ENCODE measurements at regions of chr10 and their contacts with region 1.

Region 1: DNA sequence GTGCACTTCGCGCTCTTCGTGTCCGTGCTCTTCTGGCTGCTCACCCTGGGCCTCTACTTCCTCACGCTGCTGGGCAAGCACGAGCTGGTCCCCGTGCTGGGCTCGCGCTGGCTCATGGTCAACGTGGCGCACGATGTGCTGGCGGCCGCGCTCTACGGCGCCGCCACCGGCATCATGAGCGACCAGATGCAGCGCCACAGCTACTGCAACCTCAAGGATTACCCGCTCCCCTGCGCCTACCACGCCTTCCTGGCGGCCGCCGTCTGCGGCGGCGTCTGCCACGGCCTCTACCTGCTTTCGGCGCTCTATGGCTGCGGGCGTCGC is 480 bp downstream of the MARVELD1 start:
- DNase-seq: peak; percentile 26 to 89 (median 44)
- ATAC-seq: peak; percentile 85
- H3K4me3 ChIP-seq: peak overlapping the region; percentile 67
- H3K4me3 Mint-ChIP-seq: peak overlapping the region; percentile 100
- H3K27ac ChIP-seq: no peak overlapping the region
- H3K27ac Mint-ChIP-seq: peak overlapping the region; percentile 35
- H3K4me1 ChIP-seq: peaks cover 22% of the 10 kb centered on the region
- H3K4me1 Mint-ChIP-seq: peaks cover 15% of the 10 kb centered on the region
- H3K27me3 ChIP-seq: peaks cover 0 to 7% of the 10 kb centered on the region in 2 experiments
- H3K27me3 Mint-ChIP-seq: peaks cover 28% of the 10 kb centered on the region
- CTCF ChIP-seq: no peak

Region 2: DNA sequence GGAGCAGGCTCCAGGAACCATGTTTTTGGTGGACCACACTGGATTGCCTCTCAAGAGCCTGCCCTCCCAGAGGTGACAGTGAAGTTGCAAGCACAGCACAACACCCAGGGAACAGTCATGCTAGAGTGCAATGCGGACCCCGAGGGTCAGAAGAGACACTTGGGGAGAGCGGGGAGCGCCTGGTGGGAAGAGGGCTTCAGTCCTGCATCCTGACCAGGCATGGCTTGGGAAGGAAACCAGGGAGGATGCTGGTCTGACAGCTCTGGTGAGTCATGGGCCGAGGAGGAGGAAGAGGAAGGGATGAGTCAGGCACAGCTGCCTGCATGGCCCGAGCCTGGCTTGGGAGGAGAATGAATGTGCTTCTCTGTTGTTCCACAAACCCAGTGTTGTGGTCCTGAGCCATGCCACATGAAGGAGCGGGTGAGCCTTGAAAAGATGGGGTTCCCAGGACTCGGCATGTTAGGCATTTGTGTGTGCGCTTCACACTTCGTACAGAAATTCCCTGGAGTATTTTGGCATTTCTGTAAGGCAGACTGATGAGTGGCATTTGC is 170.9 kb before region 1 on chr10:
- CTCF ChIA-PET with region 1: no interaction called
- POLR2A ChIA-PET with region 1: no interaction called
- intact Hi-C with region 1: no loop called
- DNase-seq: peak in 3 of 14 experiments; percentile 49 to 72 (median 63)
- ATAC-seq: no peak
- H3K4me3 ChIP-seq: no peak overlapping the region
- H3K4me3 Mint-ChIP-seq: no peak overlapping the region
- H3K27ac ChIP-seq: no peak overlapping the region
- H3K27ac Mint-ChIP-seq: no peak overlapping the region
- H3K4me1 ChIP-seq: peaks cover 10% of the 10 kb centered on the region
- H3K4me1 Mint-ChIP-seq: no peaks in the 10 kb centered on the region
- H3K27me3 ChIP-seq: no peaks in the 10 kb centered on the region
- H3K27me3 Mint-ChIP-seq: no peaks in the 10 kb centered on the region
- CTCF ChIP-seq: no peak

Region 3: DNA sequence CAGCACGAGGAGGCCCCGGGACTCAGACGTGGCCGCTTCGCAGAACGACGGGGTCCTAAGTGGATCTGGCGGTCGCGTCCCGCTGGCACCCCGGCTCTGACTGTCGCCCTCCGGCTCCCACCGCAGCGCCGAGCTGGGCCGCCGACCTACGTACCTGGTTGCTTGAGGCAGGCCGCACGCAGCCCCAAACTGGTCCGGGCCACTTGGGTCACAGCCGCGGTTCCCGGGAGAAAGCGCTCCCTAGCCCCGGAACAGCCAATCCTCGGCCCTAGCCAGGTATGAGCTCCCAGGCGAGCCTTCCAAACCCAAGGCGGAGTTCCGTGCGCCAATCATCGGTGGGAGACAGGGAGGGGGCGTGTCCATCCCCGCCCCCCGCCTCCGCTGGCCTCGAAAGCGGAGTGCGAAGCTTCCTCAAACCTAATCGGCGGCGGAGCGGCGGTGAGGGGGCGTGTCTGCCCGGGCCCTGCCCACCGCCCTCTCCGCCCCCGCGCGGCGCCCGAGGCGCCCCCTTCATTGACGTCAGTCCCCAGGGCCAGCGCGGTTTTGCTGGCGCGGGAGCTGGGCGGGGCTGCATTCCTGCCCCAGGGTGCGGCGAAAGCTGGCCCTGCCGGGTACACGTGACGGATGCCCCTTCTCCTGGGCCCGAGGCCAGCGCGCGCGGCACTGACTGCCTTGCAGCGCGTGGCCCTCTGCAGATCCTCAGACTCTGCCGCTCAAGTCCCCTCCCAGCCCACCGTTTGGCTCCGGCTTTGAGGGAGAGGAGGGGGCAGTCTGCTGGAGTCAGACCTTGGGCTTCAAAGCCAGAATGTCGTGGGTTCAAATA is 26.8 kb before region 1 on chr10 and contains the start of gene AVPI1:
- CTCF ChIA-PET with region 1: interaction called, 10 read pairs
- POLR2A ChIA-PET with region 1: interaction called, 14 read pairs
- intact Hi-C with region 1: no loop called
- DNase-seq: peak; percentile 90 to 98 (median 94)
- ATAC-seq: peak; percentile 91
- H3K4me3 ChIP-seq: peak within 1 kb of the TSS; percentile 82
- H3K4me3 Mint-ChIP-seq: peak within 1 kb of the TSS; percentile 90
- H3K27ac ChIP-seq: peak within 1 kb of the TSS; percentile 52 to 62
- H3K27ac Mint-ChIP-seq: peak within 1 kb of the TSS; percentile 75
- H3K4me1 ChIP-seq: peaks cover 35% of the 10 kb centered on the region
- H3K4me1 Mint-ChIP-seq: peaks cover 16% of the 10 kb centered on the region
- H3K27me3 ChIP-seq: no peaks in the 10 kb centered on the region
- H3K27me3 Mint-ChIP-seq: no peaks in the 10 kb centered on the region
- CTCF ChIP-seq: no peak
- total RNA-seq, gene AVPI1: 10.7 to 11.6 TPM

Region 4: DNA sequence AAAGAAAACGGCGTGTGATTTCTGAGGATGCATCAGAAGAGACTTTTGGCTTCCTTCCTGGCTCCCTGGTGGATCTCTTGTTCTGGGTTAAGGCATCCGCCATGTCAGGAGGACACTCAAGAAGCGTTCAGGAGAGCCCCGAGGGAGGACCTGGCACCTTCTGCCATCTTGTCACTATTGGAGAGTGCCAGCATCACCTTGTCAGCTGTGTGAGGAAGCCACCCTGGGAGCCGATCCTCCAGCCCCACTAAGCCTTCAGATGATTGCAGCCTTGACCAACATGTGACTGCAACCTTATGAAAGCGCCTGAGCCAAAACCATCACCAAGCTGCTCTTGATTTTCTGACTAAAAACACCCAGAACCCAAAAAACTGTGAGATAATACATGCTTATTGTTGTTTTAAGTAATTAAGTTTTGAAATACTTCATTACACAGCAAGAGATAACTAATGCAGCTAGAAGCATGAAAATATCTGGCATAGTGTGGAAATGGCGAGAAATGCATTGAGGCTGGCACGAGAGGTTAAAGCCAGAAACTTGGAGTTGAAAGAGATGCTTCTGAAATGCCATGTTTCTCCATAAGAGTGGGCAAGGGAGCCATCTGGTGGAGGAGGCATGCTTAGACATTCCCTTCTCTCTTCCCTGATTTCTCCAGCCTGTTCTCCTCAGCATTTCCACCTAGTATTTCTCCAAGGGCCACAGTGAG is 17.5 kb after region 1 on chr10:
- CTCF ChIA-PET with region 1: interaction called, 11 read pairs
- POLR2A ChIA-PET with region 1: interaction called, 13 read pairs
- intact Hi-C with region 1: loop called (anchors 1 kb)
- DNase-seq: peak; percentile 27 to 82 (median 48)
- ATAC-seq: peak; percentile 75
- H3K4me3 ChIP-seq: no peak overlapping the region
- H3K4me3 Mint-ChIP-seq: no peak overlapping the region
- H3K27ac ChIP-seq: no peak overlapping the region
- H3K27ac Mint-ChIP-seq: no peak overlapping the region
- H3K4me1 ChIP-seq: peaks cover 8% of the 10 kb centered on the region
- H3K4me1 Mint-ChIP-seq: peaks cover 12% of the 10 kb centered on the region
- H3K27me3 ChIP-seq: no peaks in the 10 kb centered on the region
- H3K27me3 Mint-ChIP-seq: peaks cover 8% of the 10 kb centered on the region
- CTCF ChIP-seq: peak; percentile 83

Region 5: DNA sequence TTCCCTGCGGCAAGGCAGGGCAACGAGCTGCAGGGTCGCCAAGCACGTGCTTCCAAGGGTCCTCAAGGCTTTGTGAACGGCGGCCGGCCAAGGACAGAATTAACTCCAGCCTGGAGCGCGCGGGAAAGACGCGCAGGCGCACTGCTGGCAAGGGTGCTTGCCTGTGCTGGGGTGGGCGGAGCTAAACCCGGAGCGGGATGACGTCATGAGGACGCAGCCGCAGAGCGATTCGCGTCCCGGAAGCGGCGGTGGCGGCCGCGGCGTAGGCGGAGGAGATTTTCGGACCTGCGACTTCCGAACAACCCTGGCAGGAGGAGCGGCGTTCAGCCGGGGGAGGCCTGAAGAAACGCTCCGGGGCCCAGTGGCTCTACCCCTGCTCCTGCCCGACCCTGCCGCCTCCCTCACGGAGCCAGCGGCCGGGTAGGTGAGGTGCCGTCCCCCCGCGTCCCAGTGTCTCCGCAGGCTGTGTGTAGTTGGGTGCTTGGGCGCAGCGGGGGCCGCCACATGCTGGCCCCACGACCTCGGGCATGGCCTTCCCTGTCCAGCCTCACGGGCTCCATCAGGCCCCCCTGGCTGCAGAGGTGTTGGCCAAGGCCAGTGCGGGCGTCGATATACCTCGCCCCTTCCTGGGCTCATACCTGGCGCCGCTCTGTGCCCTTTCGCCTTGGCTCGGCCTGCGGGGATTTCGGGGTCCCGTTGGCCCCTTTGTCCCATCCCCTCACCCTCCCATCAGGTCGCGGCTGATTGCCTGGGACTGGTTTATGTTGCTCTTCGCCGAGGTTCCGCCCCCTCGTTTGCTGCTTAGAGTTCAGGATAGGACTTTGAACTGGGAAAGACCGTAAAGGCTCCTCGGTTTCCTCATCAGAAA is 23.1 kb after region 1 on chr10 and contains the start of gene ZFYVE27:
- CTCF ChIA-PET with region 1: interaction called, 11 read pairs
- POLR2A ChIA-PET with region 1: interaction called, 13 read pairs
- intact Hi-C with region 1: no loop called
- DNase-seq: peak; percentile 91 to 98 (median 94)
- ATAC-seq: peak; percentile 90
- H3K4me3 ChIP-seq: peak within 1 kb of the TSS; percentile 80
- H3K4me3 Mint-ChIP-seq: peak within 1 kb of the TSS; percentile 97
- H3K27ac ChIP-seq: peak within 1 kb of the TSS; percentile 85 to 92
- H3K27ac Mint-ChIP-seq: peak within 1 kb of the TSS; percentile 92
- H3K4me1 ChIP-seq: peaks cover 37% of the 10 kb centered on the region
- H3K4me1 Mint-ChIP-seq: peaks cover 57% of the 10 kb centered on the region
- H3K27me3 ChIP-seq: no peaks in the 10 kb centered on the region
- H3K27me3 Mint-ChIP-seq: no peaks in the 10 kb centered on the region
- CTCF ChIP-seq: no peak
- total RNA-seq, gene ZFYVE27: 58.4 to 60.6 TPM

Region 6: DNA sequence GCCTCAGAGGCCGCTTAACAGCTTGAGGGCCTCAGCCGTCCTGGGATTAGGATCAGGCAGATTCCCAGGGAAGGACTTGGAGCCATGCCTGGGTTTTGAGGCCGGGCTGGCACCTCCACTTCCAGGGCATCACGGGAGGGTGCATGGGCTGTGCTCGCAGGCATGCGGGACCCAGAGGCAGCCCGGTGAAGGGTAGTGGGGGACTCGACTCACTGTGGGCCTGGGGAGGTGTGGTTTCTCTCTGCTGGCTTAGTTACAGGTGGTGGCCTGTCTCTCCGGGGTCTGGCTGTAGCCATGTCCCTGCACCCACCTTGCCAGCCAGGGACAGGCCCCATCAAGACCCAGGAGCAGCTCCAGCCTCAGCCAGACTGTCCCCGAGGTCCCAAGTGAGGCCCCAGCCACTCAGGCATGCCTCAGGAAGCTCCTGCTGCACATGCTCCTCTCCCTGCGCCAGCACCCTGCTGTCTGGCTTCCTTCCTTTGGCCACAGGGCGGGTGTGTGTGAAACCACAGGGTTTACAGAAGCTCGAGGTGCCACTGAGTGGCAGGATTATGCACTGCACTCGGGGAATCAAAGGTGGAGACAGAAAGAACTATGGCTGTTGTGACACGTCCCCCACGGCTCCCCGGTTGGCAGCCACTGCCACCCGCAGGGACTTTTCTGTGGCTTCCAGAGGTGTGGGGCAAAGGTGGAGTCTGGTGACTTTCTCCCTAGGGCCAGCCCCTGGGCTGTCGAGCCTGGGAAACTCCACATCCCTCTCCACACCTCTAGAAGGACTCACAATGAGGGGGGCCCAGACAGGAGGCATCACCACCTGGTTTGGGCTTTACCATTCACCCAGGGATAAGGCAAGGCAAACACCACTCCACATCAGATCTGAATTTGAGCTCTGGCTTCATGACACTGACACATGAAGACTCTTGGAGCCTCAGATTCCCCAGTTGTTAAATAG is 155.4 kb after region 1 on chr10:
- CTCF ChIA-PET with region 1: interaction called, 3 read pairs
- POLR2A ChIA-PET with region 1: no interaction called
- intact Hi-C with region 1: loop called in 1 of 2 experiments (anchors 1 kb)
- DNase-seq: peak; percentile 70 to 93 (median 78)
- ATAC-seq: peak; percentile 100
- H3K4me3 ChIP-seq: no peak overlapping the region
- H3K4me3 Mint-ChIP-seq: no peak overlapping the region
- H3K27ac ChIP-seq: peak overlapping the region in 1 of 2 donors; percentile 4
- H3K27ac Mint-ChIP-seq: peak overlapping the region; percentile 66
- H3K4me1 ChIP-seq: peaks cover 14% of the 10 kb centered on the region
- H3K4me1 Mint-ChIP-seq: peaks cover 11% of the 10 kb centered on the region
- H3K27me3 ChIP-seq: no peaks in the 10 kb centered on the region
- H3K27me3 Mint-ChIP-seq: peaks cover 11% of the 10 kb centered on the region
- CTCF ChIP-seq: peak; percentile 86